Panc1 (cell line): ENCODE measurements at regions of chr1 and their contacts with region 1.

Region 1: GRCh38 chr1:85230305-85230980 is 29.0 kb downstream of the C1orf52 start:
- DNase-seq: no peak
- ATAC-seq: peak; percentile 82
- H3K4me3 ChIP-seq: no peak overlapping the region
- H3K27ac ChIP-seq: no peak overlapping the region
- H3K4me1 ChIP-seq: no peaks in the 10 kb centered on the region
- H3K27me3 ChIP-seq: no peaks in the 10 kb centered on the region
- CTCF ChIP-seq: peak; percentile 79

Region 2: GRCh38 chr1:84353695-84354094 is 876.7 kb before region 1 on chr1:
- CTCF ChIA-PET with region 1: no interaction called
- POLR2A ChIA-PET with region 1: interaction called, 10 read pairs
- in situ Hi-C with region 1: no loop called
- intact Hi-C with region 1: no loop called
- DNase-seq: no peak
- ATAC-seq: no peak
- H3K4me3 ChIP-seq: no peak overlapping the region
- H3K27ac ChIP-seq: no peak overlapping the region
- H3K4me1 ChIP-seq: no peaks in the 10 kb centered on the region
- H3K27me3 ChIP-seq: no peaks in the 10 kb centered on the region
- CTCF ChIP-seq: no peak

Region 3: DNA sequence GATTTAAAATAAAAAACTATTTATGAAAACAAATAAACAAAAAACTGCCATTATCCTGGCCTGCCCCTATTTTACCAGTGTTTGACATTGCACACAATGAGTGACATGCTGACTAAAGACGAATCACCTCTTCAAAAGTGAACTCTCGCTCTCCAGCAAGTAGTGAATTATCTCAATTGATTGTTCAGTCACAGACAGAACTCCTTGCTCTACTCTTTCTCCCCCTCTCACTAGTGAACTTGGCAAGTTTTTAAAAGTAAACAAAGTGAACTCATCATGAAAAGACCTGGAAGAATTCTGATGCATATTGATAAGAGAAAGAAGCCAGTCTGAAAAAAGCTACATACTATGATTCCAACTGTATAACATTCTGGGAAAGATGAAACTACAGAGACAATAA is 33.7 kb after region 1 on chr1:
- CTCF ChIA-PET with region 1: no interaction called
- POLR2A ChIA-PET with region 1: no interaction called
- in situ Hi-C with region 1: no loop called
- intact Hi-C with region 1: no loop called
- DNase-seq: no peak
- ATAC-seq: no peak
- H3K4me3 ChIP-seq: no peak overlapping the region
- H3K27ac ChIP-seq: no peak overlapping the region
- H3K4me1 ChIP-seq: peaks cover 4% of the 10 kb centered on the region; the same call in 1 of the 2 replicates
- H3K27me3 ChIP-seq: no peaks in the 10 kb centered on the region
- CTCF ChIP-seq: no peak